AG04450 (cell line): ENCODE measurements at regions of chr3 and their contacts with region 1.

Region 1: DNA sequence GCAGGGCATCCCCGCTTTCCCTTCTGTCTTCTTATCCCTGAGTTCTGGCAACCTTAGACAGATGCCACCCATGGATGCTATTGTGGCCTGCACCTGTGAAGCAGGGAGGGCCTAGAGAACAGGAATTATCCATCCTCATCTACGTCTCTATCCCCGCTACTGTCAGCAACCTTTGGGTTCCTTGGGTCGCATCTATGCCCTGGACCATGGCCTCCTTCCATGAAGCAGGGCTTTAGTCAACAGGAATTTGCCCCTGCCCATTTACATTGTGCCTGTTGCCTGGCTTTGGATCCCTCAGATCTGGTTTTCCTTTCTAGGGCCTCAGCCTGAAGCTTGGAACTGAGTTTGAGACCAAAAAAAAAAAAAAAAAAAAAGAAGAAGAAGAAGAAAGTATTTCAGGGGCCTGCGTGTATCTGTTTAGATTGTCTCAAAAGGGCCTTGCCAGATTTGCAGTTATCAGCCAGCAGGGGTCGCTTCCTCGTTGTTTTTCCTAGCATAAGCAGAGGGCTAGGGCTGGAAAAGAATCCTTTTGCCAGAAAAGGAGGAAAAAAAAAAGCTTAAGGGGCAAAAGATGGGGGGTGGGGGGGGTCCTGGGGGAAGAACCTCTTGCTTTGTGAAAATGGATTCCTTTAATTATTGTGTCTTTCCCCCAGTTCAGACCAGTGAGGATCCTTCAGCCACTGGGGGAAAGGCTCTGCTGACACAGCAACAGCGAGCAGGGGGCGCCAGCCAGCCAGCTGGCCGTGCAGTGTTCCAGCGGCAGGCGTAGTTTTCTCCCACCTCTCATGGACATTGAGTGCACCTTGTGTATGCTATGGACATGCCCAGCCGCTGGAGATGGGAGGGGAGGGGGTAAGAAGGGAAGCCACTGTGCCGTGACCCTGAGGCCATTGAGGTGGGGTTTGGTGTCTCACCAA is 65.7 kb upstream of the ALDH1L1 start:
- DNase-seq: peak; percentile 46
- H3K4me3 ChIP-seq: no peak overlapping the region
- H3K27ac ChIP-seq: no peak overlapping the region
- H3K27me3 ChIP-seq: peaks cover 4% of the 10 kb centered on the region
- CTCF ChIP-seq: peak; percentile 70

Region 2: DNA sequence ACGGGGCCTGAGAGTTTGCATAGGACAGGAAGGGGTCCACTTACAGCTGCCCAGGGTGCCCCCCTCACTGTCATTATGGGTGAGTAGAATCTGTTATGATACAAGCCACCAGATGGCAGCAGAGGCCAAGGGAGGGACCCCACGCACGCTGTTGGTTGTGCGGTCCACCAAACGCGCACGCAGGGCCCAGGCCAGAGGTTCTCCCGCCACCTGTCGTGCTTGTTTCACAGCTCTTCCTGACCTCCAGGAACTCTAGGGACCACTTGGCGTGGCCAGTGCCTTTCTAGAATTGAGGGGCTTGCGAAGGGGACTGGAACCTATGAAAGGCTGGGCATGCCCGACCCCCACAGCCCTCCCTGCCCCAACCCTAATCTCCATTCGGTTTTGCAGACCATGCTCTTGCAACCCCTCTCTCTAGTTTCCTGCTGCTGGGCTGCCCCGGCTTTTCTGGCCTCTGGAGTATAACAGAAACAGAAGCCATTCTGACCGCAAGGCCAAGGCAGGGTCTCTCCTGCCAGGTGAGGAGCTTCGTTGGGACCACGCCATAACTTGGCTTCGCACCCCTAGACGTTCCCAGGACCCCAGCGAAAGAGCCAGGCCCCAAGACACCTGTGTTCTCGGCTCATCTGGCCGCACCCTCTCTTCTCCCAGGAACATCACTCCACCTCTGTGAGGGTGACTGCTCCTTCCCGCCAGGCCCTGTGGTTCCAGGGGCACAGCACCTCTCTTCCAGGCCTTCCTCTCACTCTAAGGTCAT is 111.7 kb before region 1 on chr3:
- CTCF ChIA-PET with region 1: interaction called, 15 read pairs
- POLR2A ChIA-PET with region 1: no interaction called
- DNase-seq: peak; percentile 8
- H3K4me3 ChIP-seq: no peak overlapping the region
- H3K27ac ChIP-seq: peak overlapping the region; percentile 11
- H3K27me3 ChIP-seq: peaks cover 21% of the 10 kb centered on the region
- CTCF ChIP-seq: peak; percentile 79

Region 3: DNA sequence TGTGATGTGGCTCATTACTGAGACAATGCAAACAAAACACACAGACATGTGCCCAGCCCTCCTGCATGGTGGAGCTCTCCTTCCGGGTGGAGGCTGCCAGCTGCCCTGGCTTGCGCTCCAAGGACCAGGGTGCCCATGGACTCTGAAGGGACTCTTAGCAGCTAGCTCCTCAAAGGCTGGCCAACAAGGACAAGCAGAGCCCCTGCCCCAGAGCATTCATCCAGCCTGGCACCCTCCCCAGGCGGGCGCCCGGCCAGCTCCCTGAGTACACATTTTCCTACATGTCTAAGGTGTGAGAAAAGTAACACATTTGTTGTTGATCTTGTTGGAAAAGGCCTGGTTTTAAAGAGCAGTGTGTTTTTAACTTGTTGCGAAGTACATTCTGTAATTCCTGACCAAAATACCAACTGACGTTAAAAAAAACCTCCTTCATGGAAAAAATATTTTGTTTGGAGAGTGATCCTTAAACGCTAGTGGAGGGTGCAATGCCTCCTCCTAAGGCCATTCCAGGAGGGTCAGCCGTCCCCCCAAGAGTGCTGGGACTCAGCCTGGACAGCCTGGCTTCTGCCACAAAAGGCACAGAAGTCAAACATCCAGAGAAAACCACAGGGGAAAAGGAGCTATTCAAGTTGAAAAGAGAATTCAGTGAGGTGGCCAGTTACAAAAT is 24.2 kb after region 1 on chr3:
- CTCF ChIA-PET with region 1: interaction called, 11 read pairs
- POLR2A ChIA-PET with region 1: no interaction called
- DNase-seq: no peak
- H3K4me3 ChIP-seq: no peak overlapping the region
- H3K27ac ChIP-seq: no peak overlapping the region
- H3K27me3 ChIP-seq: no peaks in the 10 kb centered on the region
- CTCF ChIP-seq: no peak

Region 4: GRCh38 chr3:126284258-126284904 is 38.3 kb after region 1 on chr3:
- CTCF ChIA-PET with region 1: interaction called, 11 read pairs
- POLR2A ChIA-PET with region 1: no interaction called
- DNase-seq: no peak
- H3K4me3 ChIP-seq: no peak overlapping the region
- H3K27ac ChIP-seq: no peak overlapping the region
- H3K27me3 ChIP-seq: peaks cover 7% of the 10 kb centered on the region
- CTCF ChIP-seq: no peak

Region 5: DNA sequence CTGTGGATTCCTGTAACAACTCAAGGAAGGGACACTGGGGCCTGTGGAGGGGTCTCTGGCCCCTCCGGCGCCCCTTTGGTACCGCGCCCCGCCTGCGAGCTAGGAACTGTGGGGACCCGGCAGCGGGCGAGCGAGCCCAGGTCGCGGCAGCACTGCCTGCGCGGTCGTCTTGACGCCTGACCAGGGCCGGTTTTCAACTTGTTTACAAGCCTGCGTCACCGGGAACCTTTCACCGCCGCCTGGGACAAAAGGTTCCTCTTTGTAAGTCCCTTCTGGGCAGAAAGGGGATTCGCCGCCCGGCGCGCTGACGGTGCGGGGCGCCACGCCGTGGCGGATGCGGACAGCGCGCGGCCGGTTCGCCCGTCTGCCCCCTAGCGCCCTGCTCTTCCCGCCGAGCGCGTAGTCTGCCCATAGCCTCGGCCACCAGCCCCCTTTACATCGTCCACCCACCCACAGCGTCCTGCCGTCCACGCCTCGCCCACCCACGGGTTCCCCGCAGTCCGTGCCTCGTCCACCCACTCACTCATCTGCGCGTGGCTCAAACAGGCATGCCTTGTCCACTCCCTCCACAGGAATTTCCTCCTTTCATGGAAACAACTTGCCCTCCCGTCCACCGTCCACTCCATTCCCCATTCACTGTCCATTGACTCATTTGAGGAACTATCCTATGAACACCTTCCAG is 143.2 kb after region 1 on chr3:
- CTCF ChIA-PET with region 1: interaction called, 45 read pairs
- POLR2A ChIA-PET with region 1: interaction called, 3 read pairs
- DNase-seq: peak; percentile 23
- H3K4me3 ChIP-seq: peak overlapping the region; percentile 57
- H3K27ac ChIP-seq: no peak overlapping the region
- H3K27me3 ChIP-seq: peaks cover 24% of the 10 kb centered on the region
- CTCF ChIP-seq: peak; percentile 91

Region 6: GRCh38 chr3:126394575-126395228 is 148.6 kb after region 1 on chr3 and contains the start of gene CFAP100:
- CTCF ChIA-PET with region 1: interaction called, 45 read pairs
- POLR2A ChIA-PET with region 1: interaction called, 3 read pairs
- DNase-seq: no peak
- H3K4me3 ChIP-seq: peak within 1 kb of the TSS; percentile 7; the same call in 1 of the 2 replicates
- H3K27ac ChIP-seq: no peak within 1 kb of the TSS
- H3K27me3 ChIP-seq: peaks cover 42% of the 10 kb centered on the region
- CTCF ChIP-seq: no peak
- polyA plus RNA-seq, gene CFAP100: not detected in 2 replicates